ENCODE measurements at regions of chrX and their contacts with region 1.

Region 1: GRCh38 chrX:46758906-46759644 is at the start of gene SLC9A7:
- DNase-seq: peak; percentile 81
- H3K4me3 Mint-ChIP-seq: peak within 1 kb of the TSS; percentile 94
- H3K27ac Mint-ChIP-seq: peak within 1 kb of the TSS; percentile 81
- H3K4me1 Mint-ChIP-seq: peaks cover 34% of the 10 kb centered on the region
- H3K27me3 Mint-ChIP-seq: peaks cover 2% of the 10 kb centered on the region
- total RNA-seq, gene SLC9A7: 10.8 to 12.0 TPM

Region 2: DNA sequence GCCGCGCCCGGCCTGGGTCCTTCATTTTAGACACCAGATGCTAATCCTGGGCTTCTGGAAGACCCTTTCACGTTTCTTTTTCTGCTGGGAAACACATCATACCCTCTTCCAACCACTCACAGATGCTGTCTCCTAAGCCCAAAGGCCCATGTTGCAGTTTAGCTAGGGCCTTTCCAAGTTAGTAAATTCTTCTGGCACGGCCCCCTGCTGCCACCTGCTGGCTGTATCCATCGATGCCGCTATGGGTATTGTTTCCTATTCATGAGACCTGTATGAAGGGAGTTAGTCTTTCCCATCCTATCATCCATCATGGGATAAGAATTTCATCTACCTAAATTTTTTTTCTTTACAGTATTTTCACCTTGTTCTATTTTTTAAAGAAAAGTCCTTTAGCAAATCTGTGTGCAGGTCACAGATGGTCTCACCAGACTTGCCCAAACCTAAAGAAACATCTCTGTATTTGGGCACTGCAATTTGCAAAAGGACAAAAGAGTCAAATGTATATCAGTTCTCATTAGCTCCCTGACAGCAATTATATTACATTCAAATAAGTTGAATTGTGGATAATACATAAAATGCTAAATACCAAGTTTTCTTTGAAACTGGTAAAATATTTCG is 37.6 kb after region 1 on chrX:
- CTCF ChIA-PET with region 1: interaction called, 60 read pairs
- POLR2A ChIA-PET with region 1: interaction called, 5 read pairs
- DNase-seq: peak; percentile 77
- H3K4me3 Mint-ChIP-seq: no peak overlapping the region
- H3K27ac Mint-ChIP-seq: no peak overlapping the region
- H3K4me1 Mint-ChIP-seq: peaks cover 21% of the 10 kb centered on the region
- H3K27me3 Mint-ChIP-seq: peaks cover 5% of the 10 kb centered on the region

Region 3: DNA sequence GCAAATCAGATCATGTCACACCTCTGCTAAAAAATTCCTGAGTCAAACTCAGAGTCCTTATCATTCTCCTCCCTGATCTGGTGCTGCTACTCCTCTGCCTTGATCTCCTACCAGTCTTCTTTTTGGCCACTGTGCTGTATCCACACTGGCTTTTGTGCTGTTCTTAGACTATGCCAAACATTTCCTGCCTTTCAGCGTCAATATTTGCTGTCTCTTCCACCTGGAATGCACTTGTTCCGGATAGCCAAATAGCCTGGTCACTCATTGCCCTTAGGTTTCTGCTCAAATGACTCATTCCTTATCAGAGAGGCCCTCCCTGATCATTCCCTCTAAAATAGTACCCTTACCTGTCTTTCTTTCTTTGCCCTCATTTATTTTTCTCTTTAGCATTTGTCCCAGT is 53.4 kb after region 1 on chrX:
- CTCF ChIA-PET with region 1: no interaction called
- POLR2A ChIA-PET with region 1: no interaction called
- DNase-seq: no peak
- H3K4me3 Mint-ChIP-seq: no peak overlapping the region
- H3K27ac Mint-ChIP-seq: no peak overlapping the region
- H3K4me1 Mint-ChIP-seq: no peaks in the 10 kb centered on the region
- H3K27me3 Mint-ChIP-seq: peaks cover 11% of the 10 kb centered on the region

Region 4: GRCh38 chrX:47540754-47541538 is 781.9 kb after region 1 on chrX:
- CTCF ChIA-PET with region 1: no interaction called
- POLR2A ChIA-PET with region 1: no interaction called
- DNase-seq: no peak
- H3K4me3 Mint-ChIP-seq: no peak overlapping the region
- H3K27ac Mint-ChIP-seq: no peak overlapping the region
- H3K4me1 Mint-ChIP-seq: no peaks in the 10 kb centered on the region
- H3K27me3 Mint-ChIP-seq: no peaks in the 10 kb centered on the region